B cell (primary cell): ENCODE measurements at regions of chr2 and their contacts with region 1.

Region 1: DNA sequence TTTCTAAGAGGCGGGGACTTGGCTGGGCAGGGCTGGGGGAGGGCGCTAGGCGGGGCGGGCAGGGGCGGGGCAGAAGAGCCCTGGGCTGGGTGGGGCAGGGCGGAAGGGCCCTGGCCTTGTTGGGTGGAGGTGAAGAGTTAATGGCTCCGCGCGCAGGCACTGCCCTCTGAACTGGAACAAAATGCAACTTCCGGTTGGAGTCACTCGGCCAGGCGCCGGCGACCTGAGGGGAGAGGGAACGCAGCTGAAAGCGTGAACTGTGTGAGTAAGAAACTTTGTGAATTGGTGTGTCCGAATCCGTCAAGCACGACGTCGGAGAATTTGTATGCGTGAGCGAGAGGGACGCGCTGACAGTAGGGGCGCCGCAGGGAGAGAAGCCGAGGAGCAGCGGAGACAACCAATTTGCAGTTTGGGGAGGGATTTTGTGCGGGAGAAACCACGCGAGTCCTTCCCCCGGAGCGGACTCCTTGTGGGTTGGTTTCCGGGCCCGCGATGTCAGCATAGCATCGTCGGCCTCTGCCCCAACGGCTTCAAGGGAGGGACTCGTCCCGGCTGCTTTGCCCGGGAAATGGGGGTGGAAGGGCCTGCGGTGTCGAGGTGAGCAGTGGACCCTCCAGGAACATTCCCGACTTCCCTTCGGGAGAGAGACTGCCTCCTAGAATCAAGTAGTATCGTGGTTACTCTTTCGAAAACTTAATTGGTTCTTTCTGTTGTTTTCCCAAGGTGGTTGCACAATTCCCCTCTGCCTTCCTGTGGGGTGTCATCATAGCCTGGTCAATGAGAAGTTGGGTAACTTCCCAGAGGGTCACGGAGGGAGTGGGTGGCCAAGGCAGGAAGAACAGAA is at the start of gene TANK:
- DNase-seq: peak; percentile 96
- ATAC-seq: peak; percentile 95
- H3K4me3 ChIP-seq: peak within 1 kb of the TSS; percentile 90 to 99 (median 96)
- H3K4me3 Mint-ChIP-seq: peak within 1 kb of the TSS; percentile 95
- H3K27ac ChIP-seq: peak within 1 kb of the TSS; percentile 93 to 97
- H3K27ac Mint-ChIP-seq: peak within 1 kb of the TSS; percentile 96
- H3K4me1 ChIP-seq: peaks cover 37 to 45% of the 10 kb centered on the region in 2 donors
- H3K4me1 Mint-ChIP-seq: peaks cover 77% of the 10 kb centered on the region
- H3K27me3 ChIP-seq: no peaks in the 10 kb centered on the region
- H3K27me3 Mint-ChIP-seq: no peaks in the 10 kb centered on the region
- CTCF ChIP-seq: no peak
- total RNA-seq, gene TANK: 179 and 191 TPM in 2 replicates

Region 2: DNA sequence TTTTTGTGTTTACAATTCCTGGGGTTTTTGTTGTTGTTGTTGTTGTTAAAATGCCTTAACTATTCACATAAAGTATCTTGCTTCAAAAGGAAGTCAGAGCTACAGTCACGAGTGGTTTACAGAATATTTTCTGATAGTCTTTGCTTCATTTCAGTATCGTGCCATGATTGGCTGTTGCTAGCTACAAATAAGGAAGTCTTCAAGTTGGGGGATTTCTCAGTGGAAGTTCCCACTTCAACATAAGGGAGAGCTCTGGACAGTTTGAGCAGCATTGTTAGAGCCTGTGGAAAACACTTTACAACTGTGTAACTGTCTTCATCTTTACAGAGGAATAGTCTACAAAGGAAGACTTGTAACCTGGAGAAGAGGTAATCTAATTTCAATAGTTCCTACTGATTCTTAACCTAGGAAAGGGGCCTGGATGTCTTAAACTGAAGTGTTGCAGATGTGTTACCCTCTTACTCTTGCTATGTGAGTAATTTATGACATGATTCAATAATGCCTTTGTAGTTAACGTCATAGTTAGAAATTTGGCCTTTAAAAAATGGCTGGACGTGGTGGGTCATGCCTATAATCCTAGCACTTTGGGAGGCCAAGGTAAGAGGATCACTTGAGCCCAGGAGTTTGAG is 23.6 kb before region 1 on chr2:
- CTCF ChIA-PET with region 1: interaction called, 4 read pairs
- POLR2A ChIA-PET with region 1: interaction called, 9 read pairs
- intact Hi-C with region 1: loop called (anchors 1 kb)
- DNase-seq: peak; percentile 93
- ATAC-seq: peak; percentile 94
- H3K4me3 ChIP-seq: peak overlapping the region; percentile 62 to 94 (median 79)
- H3K4me3 Mint-ChIP-seq: peak overlapping the region; percentile 99
- H3K27ac ChIP-seq: peak overlapping the region; percentile 97 to 100
- H3K27ac Mint-ChIP-seq: peak overlapping the region; percentile 97
- H3K4me1 ChIP-seq: peaks cover 23 to 35% of the 10 kb centered on the region in 2 donors
- H3K4me1 Mint-ChIP-seq: peaks cover 53% of the 10 kb centered on the region
- H3K27me3 ChIP-seq: no peaks in the 10 kb centered on the region
- H3K27me3 Mint-ChIP-seq: no peaks in the 10 kb centered on the region
- CTCF ChIP-seq: no peak

Region 3: GRCh38 chr2:161199912-161200701 is 39.7 kb after region 1 on chr2:
- CTCF ChIA-PET with region 1: interaction called, 4 read pairs
- POLR2A ChIA-PET with region 1: no interaction called
- intact Hi-C with region 1: loop called (anchors 5 kb)
- DNase-seq: peak; percentile 51
- ATAC-seq: peak; percentile 76
- H3K4me3 ChIP-seq: no peak overlapping the region
- H3K4me3 Mint-ChIP-seq: peak overlapping the region; percentile 70
- H3K27ac ChIP-seq: peak overlapping the region in 1 of 2 donors; percentile 59
- H3K27ac Mint-ChIP-seq: peak overlapping the region; percentile 67
- H3K4me1 ChIP-seq: peaks cover 11 to 18% of the 10 kb centered on the region in 2 donors
- H3K4me1 Mint-ChIP-seq: peaks cover 53% of the 10 kb centered on the region
- H3K27me3 ChIP-seq: no peaks in the 10 kb centered on the region
- H3K27me3 Mint-ChIP-seq: no peaks in the 10 kb centered on the region
- CTCF ChIP-seq: no peak

Region 4: DNA sequence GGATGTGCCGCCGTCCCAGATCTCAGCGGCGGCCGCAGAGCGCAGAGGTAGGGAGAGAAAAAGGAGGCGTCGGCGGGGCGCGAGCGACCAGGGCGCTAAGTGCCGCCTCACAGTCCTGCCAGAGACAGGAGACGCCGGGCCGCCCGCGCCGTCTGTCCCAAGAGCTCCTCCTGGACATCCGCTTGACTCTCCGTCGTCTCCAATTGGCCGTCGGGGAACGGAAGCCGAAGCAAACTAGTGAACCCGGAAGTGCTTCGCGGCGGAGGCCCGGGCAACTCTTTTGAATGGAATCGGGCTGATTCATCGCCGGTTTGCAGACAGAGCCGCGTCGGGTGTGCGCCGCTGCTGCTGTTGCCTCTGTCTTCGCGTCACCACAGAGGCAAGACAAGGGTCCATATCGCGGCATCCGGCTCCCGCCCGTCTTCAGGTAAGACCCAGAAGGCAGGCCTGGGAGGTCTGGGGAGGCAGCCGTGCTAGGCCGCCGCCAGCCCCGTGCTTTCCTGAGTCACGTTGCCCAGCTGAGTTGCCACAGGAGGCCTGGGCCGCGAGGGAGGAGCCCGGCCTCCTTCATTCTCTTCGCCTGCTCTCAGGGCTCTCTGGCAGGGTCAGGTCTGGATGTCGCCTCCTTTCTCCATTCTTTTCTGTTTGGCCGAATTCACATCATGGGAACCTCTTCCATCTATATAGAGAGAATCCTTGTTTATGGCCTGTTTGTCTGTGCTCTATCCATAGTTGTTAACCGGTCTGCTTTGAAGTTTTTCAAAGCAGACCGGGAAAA is 147.9 kb after region 1 on chr2 and contains the start of gene PSMD14:
- CTCF ChIA-PET with region 1: no interaction called
- POLR2A ChIA-PET with region 1: no interaction called
- intact Hi-C with region 1: loop called (anchors 1 kb)
- DNase-seq: peak; percentile 92
- ATAC-seq: peak; percentile 90
- H3K4me3 ChIP-seq: peak within 1 kb of the TSS; percentile 58 to 89 (median 86)
- H3K4me3 Mint-ChIP-seq: peak within 1 kb of the TSS; percentile 95
- H3K27ac ChIP-seq: peak within 1 kb of the TSS; percentile 69 to 90
- H3K27ac Mint-ChIP-seq: peak within 1 kb of the TSS; percentile 95
- H3K4me1 ChIP-seq: peaks cover 18 to 20% of the 10 kb centered on the region in 2 donors
- H3K4me1 Mint-ChIP-seq: peaks cover 38% of the 10 kb centered on the region
- H3K27me3 ChIP-seq: peaks cover 0 to 3% (median 0%) of the 10 kb centered on the region in 4 experiments
- H3K27me3 Mint-ChIP-seq: no peaks in the 10 kb centered on the region
- CTCF ChIP-seq: no peak
- total RNA-seq, gene PSMD14: 24.9 and 27.0 TPM in 2 replicates